PC-9 (cell line): ENCODE measurements at regions of chr14 and their contacts with region 1.

Region 1: GRCh38 chr14:102524466-102525218 is 15.1 kb upstream of the ANKRD9 start:
- DNase-seq: peak; percentile 99 to 100
- H3K4me3 ChIP-seq: peak overlapping the region; percentile 62
- H3K27ac ChIP-seq: peak overlapping the region; percentile 93
- H3K4me1 ChIP-seq: peaks cover 50% of the 10 kb centered on the region
- H3K27me3 ChIP-seq: no peaks in the 10 kb centered on the region
- CTCF ChIP-seq: peak; percentile 100

Region 2: DNA sequence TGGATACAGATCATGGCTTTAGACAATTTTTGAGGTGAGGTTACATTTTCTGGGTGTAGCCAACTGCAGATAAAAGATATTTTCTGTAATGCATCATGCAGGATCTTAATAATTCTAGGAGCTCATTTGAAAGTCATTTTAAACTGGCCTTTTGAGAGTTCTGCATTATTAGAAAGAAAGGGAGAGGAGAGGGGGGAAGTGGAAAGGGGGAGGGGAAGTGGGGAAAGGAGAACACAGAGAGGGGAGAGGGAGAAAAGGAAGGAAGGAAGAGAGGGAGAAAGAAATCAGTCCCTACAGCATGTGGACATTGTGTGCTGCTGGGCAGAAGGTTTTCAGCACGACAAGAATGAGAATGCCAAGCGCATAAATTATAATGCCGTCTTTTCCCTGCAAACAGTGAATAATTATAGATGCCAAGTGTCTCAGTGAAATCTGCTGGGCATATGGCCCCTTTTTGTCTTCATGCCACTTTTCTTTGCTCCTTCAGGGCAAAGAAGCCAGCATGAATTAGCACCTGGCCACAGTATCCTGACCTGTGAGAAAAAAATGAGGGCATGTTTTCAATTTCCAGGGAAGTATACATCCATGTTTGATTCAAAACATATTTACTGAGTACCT is 785.8 kb before region 1 on chr14:
- CTCF ChIA-PET with region 1: no interaction called
- POLR2A ChIA-PET with region 1: interaction called, 27 read pairs
- intact Hi-C with region 1: no loop called
- DNase-seq: peak in 1 of 2 experiments; percentile 4
- H3K4me3 ChIP-seq: no peak overlapping the region
- H3K27ac ChIP-seq: no peak overlapping the region
- H3K4me1 ChIP-seq: peaks cover 5% of the 10 kb centered on the region
- H3K27me3 ChIP-seq: no peaks in the 10 kb centered on the region
- CTCF ChIP-seq: no peak

Region 3: GRCh38 chr14:102579696-102580334 is 55.2 kb after region 1 on chr14:
- CTCF ChIA-PET with region 1: interaction called, 6 read pairs
- POLR2A ChIA-PET with region 1: interaction called, 20 read pairs
- intact Hi-C with region 1: no loop called
- DNase-seq: peak; percentile 70 to 77
- H3K4me3 ChIP-seq: no peak overlapping the region
- H3K27ac ChIP-seq: peak overlapping the region; percentile 51
- H3K4me1 ChIP-seq: peaks cover 21% of the 10 kb centered on the region
- H3K27me3 ChIP-seq: no peaks in the 10 kb centered on the region
- CTCF ChIP-seq: no peak

Region 4: GRCh38 chr14:102694530-102695166 is 170.0 kb after region 1 on chr14:
- CTCF ChIA-PET with region 1: interaction called, 27 read pairs
- POLR2A ChIA-PET with region 1: interaction called, 3 read pairs
- intact Hi-C with region 1: loop called (anchors 1 kb)
- DNase-seq: peak; percentile 66 to 80
- H3K4me3 ChIP-seq: no peak overlapping the region
- H3K27ac ChIP-seq: no peak overlapping the region
- H3K4me1 ChIP-seq: peaks cover 26% of the 10 kb centered on the region
- H3K27me3 ChIP-seq: no peaks in the 10 kb centered on the region
- CTCF ChIP-seq: peak; percentile 99

Region 5: DNA sequence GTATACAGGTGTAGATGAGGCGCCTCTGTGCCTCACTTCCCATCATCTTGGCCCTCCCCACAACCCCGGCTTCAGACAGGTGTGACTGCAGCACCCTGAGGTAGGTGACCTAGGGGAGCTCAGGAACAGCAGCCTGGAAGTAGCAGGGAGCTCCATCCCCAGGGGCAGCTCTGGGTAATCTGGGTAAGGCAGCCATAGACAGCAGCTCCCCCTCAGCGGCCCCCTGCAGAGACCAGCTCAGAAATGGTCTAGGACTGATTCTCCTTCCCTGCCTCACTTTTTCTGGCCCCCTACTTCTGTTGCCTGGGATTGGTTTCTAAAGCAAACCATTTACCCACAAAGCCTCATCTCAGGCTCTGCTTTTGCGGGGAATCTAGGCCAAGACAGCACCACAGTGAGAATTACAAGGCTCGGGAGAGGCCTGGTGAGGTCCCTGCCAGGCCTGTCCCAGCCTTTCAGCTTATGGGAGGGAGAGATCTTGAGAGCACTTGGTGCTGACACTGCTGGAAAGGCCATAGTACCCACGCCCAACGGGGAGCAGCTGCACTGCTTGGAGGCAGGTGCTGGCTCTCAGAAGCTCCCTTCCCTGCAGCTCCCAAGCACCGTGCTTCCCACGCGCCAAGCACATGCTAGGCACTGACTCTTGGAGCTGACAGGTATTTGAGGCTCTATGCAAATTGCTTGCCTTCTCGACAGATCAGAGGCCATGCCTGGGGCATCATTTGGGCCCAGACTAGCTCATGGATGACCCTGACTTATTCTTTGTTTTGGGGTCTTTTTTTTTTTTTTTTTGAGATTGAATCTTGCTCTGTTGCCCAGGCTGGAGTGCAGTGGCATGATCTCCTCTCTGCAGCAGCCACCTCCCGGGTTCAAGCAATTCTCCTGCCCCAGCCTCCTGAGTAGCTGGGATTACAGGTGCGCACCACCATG is 207.5 kb after region 1 on chr14:
- CTCF ChIA-PET with region 1: no interaction called
- POLR2A ChIA-PET with region 1: no interaction called
- intact Hi-C with region 1: no loop called
- DNase-seq: no peak
- H3K4me3 ChIP-seq: no peak overlapping the region
- H3K27ac ChIP-seq: no peak overlapping the region
- H3K4me1 ChIP-seq: no peaks in the 10 kb centered on the region
- H3K27me3 ChIP-seq: no peaks in the 10 kb centered on the region
- CTCF ChIP-seq: no peak

Region 6: DNA sequence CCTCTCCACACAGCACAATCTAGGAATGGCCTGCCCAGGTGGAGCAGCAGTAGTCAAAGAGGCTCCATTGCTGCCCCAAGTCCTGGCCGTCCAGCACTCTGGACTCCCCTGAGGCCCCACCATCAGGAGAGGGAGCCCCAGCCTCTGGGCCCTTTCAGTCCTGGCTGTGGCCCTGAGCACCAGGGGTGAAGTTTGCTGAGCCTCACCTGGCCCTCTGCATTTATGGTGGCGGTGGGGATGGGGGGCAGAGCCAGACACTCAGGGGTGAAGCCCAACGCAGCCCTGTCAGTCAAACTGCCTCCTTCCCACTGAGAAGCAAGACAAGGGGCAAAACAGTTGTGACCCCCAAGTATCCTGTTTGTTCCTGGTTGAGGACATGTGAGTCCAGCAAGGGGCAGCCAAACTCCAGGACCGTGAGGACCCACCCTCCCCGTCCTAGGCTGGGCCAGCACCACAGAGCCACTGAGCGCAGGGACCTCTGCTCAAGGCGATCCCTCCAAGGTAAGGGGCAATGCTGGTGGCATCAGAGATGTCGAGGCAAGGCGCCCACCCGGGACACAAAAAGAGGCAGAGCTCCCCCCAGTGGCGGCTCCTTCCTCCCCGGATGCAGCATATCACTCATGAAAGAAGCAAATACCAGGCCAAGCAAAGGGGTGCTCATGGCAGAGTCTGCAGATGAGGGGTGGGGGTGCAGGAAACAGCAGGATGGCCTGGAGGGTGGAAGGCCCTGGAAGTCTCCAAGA is 393.0 kb after region 1 on chr14:
- CTCF ChIA-PET with region 1: no interaction called
- POLR2A ChIA-PET with region 1: interaction called, 3 read pairs
- intact Hi-C with region 1: loop called (anchors 1 kb)
- DNase-seq: peak in 1 of 2 experiments; percentile 54
- H3K4me3 ChIP-seq: no peak overlapping the region
- H3K27ac ChIP-seq: no peak overlapping the region
- H3K4me1 ChIP-seq: no peaks in the 10 kb centered on the region
- H3K27me3 ChIP-seq: no peaks in the 10 kb centered on the region
- CTCF ChIP-seq: peak; percentile 82

Region 7: DNA sequence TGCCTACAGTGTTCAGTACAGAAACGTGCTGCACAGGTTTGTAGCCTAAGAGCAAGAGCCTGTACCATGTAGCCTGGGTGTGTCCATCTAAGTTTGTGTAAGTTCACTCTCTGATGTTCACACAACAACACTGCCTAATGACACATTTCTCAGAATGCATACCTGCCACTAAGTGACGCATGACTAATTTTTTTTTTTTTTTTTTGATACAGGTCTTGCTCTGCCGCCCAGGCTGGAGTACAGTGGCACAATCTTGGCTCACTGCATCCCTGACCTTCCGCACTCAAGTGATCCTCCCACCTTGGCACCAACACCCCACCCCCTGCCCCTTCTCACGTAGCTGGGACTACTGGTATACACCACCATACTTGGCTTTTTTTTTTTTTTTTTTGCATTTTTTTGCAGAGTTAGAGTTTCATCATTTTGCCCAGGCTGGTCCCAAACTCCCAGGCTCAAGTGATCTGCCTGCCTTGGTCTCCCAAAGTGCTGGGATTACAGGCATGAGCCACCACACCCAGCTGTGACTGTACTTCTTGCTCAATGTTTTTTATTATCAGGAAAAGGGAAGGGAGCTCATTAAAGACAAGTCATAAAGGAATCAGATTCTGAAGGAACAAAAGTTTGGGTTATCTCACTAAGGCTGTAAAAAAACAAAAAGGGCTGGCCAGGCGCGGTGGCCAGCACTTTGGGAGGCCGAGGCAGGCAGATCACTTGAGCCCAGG is 542.8 kb after region 1 on chr14:
- CTCF ChIA-PET with region 1: interaction called, 3 read pairs
- POLR2A ChIA-PET with region 1: interaction called, 3 read pairs
- intact Hi-C with region 1: loop called (anchors 5 kb)
- DNase-seq: peak; percentile 92 to 100
- H3K4me3 ChIP-seq: peak overlapping the region; percentile 20; the same call in 1 of the 2 replicates
- H3K27ac ChIP-seq: peak overlapping the region; percentile 94
- H3K4me1 ChIP-seq: peaks cover 60% of the 10 kb centered on the region
- H3K27me3 ChIP-seq: no peaks in the 10 kb centered on the region
- CTCF ChIP-seq: no peak